A549 (cell line): ENCODE measurements at regions of chr14 and their contacts with region 1.

Region 1: DNA sequence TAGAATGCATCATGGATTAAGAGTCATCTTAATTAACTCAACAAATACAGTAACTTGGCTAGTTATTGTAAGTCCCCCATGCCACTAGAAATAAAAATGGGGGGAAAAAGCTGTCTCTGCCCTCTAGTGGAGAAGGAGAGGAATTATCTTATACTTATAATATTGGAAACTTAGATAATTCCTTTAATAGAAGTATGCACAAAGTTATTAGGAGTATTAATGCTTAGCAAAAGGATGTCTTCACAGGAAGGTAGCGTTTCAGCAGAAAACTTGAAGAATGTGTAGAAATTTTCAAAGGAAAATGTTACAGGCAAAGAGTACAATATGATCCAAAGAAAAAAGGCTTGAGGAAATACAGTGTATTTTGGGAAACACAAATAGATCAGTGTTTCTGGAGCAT is 19.8 kb downstream of the OR5AU1 start:
- DNase-seq: peak; percentile 20 to 50
- ATAC-seq: peak in 1 of 2 experiments; percentile 48; a peak in 1 of 6 replicates
- H3K4me3 ChIP-seq: no peak overlapping the region
- H3K27ac ChIP-seq: no peak overlapping the region
- H3K4me1 ChIP-seq: no peaks in the 10 kb centered on the region
- CTCF ChIP-seq: peak; percentile 75
- EP300 ChIP-seq: no peak
- POLR2A ChIP-seq: no peak
- RAD21 ChIP-seq: peak; percentile 43 to 50; a peak in 4 of 5 replicates

Region 2: GRCh38 chr14:21024585-21025370 is 111.2 kb before region 1 on chr14 and contains the start of gene NDRG2:
- CTCF ChIA-PET with region 1: no interaction called
- POLR2A ChIA-PET with region 1: no interaction called
- DNase-seq: peak; percentile 14 to 49
- ATAC-seq: peak; percentile 78 to 85
- H3K4me3 ChIP-seq: peak within 1 kb of the TSS; percentile 58
- H3K27ac ChIP-seq: peak within 1 kb of the TSS; percentile 67 to 84
- H3K4me1 ChIP-seq: 0 out of 3 replicates have a peak, but pooled peaks cover 3% of the 10 kb centered on the region
- CTCF ChIP-seq: no peak
- EP300 ChIP-seq: no peak
- POLR2A ChIP-seq: no peak
- RAD21 ChIP-seq: no peak
- polyA plus RNA-seq, gene NDRG2: 6.8 and 8.8 TPM in 2 replicates

Region 3: GRCh38 chr14:21109377-21110260 is 26.4 kb before region 1 on chr14:
- CTCF ChIA-PET with region 1: interaction called, 15 read pairs
- POLR2A ChIA-PET with region 1: no interaction called
- DNase-seq: no peak
- ATAC-seq: no peak
- H3K4me3 ChIP-seq: no peak overlapping the region
- H3K27ac ChIP-seq: no peak overlapping the region
- H3K4me1 ChIP-seq: peaks cover 40% of the 10 kb centered on the region
- CTCF ChIP-seq: no peak
- EP300 ChIP-seq: no peak
- POLR2A ChIP-seq: no peak
- RAD21 ChIP-seq: no peak

Region 4: GRCh38 chr14:21121106-21121505 is 14.9 kb before region 1 on chr14:
- CTCF ChIA-PET with region 1: interaction called, 34 read pairs
- POLR2A ChIA-PET with region 1: no interaction called
- DNase-seq: no peak
- ATAC-seq: no peak
- H3K4me3 ChIP-seq: no peak overlapping the region
- H3K27ac ChIP-seq: no peak overlapping the region
- H3K4me1 ChIP-seq: no peaks in the 10 kb centered on the region
- CTCF ChIP-seq: no peak
- EP300 ChIP-seq: no peak
- POLR2A ChIP-seq: no peak
- RAD21 ChIP-seq: no peak

Region 5: GRCh38 chr14:21185491-21185890 is 49.5 kb after region 1 on chr14:
- CTCF ChIA-PET with region 1: no interaction called
- POLR2A ChIA-PET with region 1: no interaction called
- DNase-seq: no peak
- ATAC-seq: no peak
- H3K4me3 ChIP-seq: no peak overlapping the region
- H3K27ac ChIP-seq: no peak overlapping the region
- H3K4me1 ChIP-seq: no peaks in the 10 kb centered on the region
- CTCF ChIP-seq: no peak
- EP300 ChIP-seq: no peak
- POLR2A ChIP-seq: no peak
- RAD21 ChIP-seq: no peak

Region 6: DNA sequence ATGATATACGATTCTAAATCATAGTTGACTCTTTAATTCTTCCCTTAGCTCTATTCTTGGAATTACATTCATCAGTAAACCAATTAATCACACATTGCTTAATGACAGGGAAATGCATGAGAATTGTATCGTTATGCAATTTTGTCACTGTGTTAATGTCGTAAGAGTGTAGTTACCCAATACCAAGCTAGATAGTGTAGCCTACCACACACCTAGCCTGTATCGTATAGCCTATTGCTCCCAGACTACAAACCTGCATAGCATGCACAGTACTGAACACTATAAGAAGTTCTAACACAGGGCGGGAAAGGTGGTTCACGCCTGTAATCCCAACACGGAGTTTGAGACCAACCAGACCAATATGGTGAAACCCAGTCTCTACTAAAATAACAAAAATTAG is 108.5 kb after region 1 on chr14:
- CTCF ChIA-PET with region 1: no interaction called
- POLR2A ChIA-PET with region 1: no interaction called
- DNase-seq: no peak
- ATAC-seq: peak in 1 of 2 experiments; percentile 37; a peak in 2 of 6 replicates
- H3K4me3 ChIP-seq: no peak overlapping the region
- H3K27ac ChIP-seq: no peak overlapping the region
- H3K4me1 ChIP-seq: peaks cover 61% of the 10 kb centered on the region
- CTCF ChIP-seq: no peak
- EP300 ChIP-seq: no peak
- POLR2A ChIP-seq: no peak
- RAD21 ChIP-seq: no peak

Region 7: GRCh38 chr14:21287168-21287567 is 151.1 kb after region 1 on chr14:
- CTCF ChIA-PET with region 1: no interaction called
- POLR2A ChIA-PET with region 1: no interaction called
- DNase-seq: no peak
- ATAC-seq: no peak; a peak in 1 of 6 replicates
- H3K4me3 ChIP-seq: no peak overlapping the region
- H3K27ac ChIP-seq: no peak overlapping the region
- H3K4me1 ChIP-seq: no peaks in the 10 kb centered on the region
- CTCF ChIP-seq: no peak
- EP300 ChIP-seq: no peak
- POLR2A ChIP-seq: no peak
- RAD21 ChIP-seq: no peak